ENCODE measurements at regions of chr14 and their contacts with region 1.

Region 1: GRCh38 chr14:55938249-55938791 is 179.9 kb upstream of the PELI2 start:
- DNase-seq: peak; percentile 89
- H3K4me3 Mint-ChIP-seq: peak overlapping the region; percentile 36
- H3K27ac Mint-ChIP-seq: peak overlapping the region; percentile 84
- H3K4me1 Mint-ChIP-seq: peaks cover 27% of the 10 kb centered on the region
- H3K27me3 Mint-ChIP-seq: no peaks in the 10 kb centered on the region
- CTCF ChIP-seq: no peak

Region 2: GRCh38 chr14:55240526-55241178 is 697.7 kb before region 1 on chr14:
- CTCF ChIA-PET with region 1: no interaction called
- POLR2A ChIA-PET with region 1: no interaction called
- intact Hi-C with region 1: no loop called
- DNase-seq: no peak
- H3K4me3 Mint-ChIP-seq: no peak overlapping the region
- H3K27ac Mint-ChIP-seq: no peak overlapping the region
- H3K4me1 Mint-ChIP-seq: no peaks in the 10 kb centered on the region
- H3K27me3 Mint-ChIP-seq: no peaks in the 10 kb centered on the region
- CTCF ChIP-seq: no peak

Region 3: DNA sequence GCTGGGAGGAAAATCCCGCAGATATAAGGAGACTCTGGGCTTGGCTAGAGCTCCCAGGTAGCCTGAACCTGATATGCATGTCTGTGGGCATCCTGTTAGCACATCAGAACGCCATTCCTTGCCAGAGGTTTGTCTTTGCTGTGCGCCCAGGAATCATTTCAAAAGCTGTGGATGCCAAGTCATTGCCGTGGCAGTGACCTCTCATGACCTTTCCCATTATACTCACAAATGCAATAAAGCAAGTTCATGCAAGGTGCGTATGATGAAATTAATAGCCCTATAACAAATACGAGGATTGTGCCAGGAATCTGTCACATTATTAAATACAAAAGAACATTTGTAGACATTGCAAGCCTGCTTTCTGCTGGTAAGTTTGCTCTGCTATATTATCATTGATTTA is 49.2 kb before region 1 on chr14:
- CTCF ChIA-PET with region 1: no interaction called
- POLR2A ChIA-PET with region 1: interaction called, 14 read pairs
- intact Hi-C with region 1: no loop called
- DNase-seq: peak; percentile 94
- H3K4me3 Mint-ChIP-seq: no peak overlapping the region
- H3K27ac Mint-ChIP-seq: no peak overlapping the region
- H3K4me1 Mint-ChIP-seq: peaks cover 22% of the 10 kb centered on the region
- H3K27me3 Mint-ChIP-seq: no peaks in the 10 kb centered on the region
- CTCF ChIP-seq: no peak